Posterior vena cava (tissue), 2 donors: ENCODE measurements at regions of chr11 and their contacts with region 1.

Region 1: DNA sequence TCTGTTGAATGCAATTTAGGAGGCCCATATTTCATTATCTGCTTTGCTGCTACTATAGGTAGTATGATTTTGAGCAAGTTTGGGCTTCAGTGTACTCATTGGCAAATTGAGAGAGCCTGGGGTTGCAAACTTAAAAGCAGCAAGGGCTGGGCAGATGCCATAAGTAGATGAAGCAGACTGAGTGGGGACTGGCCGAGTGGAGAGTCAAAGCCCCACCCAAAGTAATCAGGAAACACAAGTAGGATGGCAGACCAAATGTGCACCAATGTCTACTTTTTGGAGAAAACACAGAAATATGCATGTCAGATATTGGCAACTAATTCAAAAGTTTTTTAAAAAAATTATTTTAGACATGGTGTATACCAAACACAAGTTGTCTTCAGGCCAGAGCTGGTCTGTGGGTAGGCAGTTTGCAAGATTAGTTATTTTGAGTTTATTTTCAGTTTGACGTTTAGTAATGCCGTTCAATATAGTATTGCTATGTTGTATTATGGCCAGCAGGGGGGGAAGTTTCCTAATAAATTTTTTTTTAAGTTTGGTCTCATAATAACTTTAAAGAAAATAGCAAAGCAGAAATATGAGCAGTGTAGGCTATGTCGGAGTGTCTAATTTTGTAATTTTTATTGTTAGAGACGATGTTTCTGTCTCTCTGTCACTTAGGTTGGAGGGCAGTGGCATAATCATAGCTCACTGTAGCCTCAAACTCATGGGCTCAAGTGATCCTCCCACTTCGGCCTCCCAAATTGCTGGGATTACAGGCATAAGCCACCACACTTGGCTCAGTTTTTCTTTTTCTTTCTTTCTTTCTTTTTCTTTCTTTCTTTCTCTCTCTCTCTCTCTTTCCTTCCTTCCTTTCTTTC is 105.1 kb downstream of the HIPK3 start:
- DNase-seq: no peak

Region 2: GRCh38 chr11:33248416-33248971 is 113.8 kb before region 1 on chr11:
- intact Hi-C with region 1: no loop called
- DNase-seq: no peak

Region 3: DNA sequence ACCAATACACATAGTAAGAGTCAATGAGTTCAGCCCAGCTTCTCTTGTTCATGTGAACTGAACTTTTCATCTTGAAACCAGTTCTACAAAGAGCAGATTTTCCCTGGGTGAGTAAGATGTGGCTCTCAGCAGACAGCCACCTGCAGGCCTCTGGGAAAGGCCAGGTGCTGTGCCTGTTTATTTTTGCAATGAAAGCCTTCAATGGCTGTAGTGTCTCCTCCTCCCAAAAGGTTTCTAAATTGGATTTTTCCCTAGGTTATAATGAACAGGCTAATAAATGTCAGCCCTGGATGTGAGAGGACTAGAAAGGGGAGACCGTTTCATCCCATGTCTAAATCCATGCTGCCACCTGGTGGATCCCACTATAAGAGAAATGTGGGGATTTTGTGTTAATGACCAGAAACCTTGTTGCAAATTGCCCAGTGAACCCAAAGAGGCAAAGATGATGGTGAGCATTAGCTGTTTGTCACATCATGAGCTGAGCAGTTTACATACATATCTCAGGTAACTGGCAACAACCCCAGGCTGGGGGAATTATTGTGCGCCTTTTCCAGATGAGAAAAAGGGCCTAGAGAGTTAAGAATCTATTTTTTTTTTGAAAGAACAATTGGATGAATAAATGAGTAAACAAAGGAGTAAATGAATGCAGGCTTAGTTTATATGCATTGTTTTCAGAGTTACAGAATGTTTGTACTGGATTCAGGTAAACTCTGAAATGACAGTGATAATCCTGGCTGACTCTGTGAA is 325.6 kb after region 1 on chr11:
- intact Hi-C with region 1: loop called in 1 of 2 experiments (anchors 5 kb)
- DNase-seq: no peak

Region 4: GRCh38 chr11:33742249-33742851 is 380.1 kb after region 1 on chr11:
- intact Hi-C with region 1: loop called (anchors 10 kb)
- DNase-seq: no peak

Region 5: DNA sequence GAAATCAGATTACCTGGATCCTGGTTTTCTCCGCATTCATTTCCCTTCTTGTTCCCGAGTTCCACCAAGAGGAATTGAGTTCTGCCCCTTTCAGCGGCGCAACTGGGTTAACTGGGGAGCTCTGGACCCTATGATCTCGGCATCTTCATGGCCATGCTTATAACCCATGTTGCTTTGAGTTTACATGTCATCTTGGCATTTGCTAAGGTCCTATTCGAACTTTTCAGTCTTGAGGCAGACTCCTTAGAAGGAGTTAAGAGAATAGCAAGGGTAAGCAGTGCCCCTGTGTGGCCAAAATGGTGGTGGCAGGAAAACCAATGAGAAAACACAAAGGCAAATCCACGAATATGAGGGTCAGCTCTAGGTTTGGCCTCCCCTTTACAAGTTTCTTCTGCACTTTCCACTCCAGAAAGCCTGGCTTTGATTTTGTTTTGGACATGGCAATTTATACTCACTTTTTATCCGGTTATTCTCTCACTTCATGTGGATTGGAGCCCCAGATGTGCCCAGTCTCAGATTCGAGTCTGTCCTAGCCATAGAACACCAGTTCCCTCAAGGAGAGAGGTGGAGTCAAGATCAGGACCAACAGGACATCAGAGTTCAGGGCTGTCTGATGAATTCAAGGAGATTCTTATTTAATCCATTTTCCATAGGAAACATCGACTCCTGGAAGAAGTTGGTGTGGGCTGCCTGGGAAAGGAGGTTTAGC is 467.3 kb after region 1 on chr11:
- intact Hi-C with region 1: loop called in 1 of 2 experiments (anchors 10 kb)
- DNase-seq: no peak

Region 6: DNA sequence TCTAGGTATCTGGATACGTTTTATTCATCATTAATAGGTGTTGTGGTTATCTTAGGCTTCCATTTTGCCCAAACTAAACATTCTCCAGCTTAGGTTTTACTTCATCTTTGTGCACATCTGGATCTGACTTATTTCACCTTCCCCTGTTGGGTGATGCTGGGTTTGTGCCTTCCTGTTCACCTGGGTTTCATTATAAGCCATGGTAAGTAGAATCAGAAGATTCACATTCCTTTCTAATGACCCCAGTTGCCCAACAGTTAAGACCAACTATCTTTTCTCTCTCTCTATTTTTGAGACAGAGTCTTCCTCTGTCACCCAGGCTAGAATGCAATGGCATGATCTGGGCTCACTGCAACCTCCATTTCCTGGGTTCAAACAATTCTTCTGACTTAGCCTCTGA is 485.0 kb after region 1 on chr11:
- intact Hi-C with region 1: loop called in 1 of 2 experiments (anchors 5 kb)
- DNase-seq: no peak